GM12878 (cell line): ENCODE measurements at regions of chr9 and their contacts with region 1.

Region 1: GRCh38 chr9:14906644-14907643 is 3.3 kb downstream of the FREM1 start:
- DNase-seq: no peak
- ATAC-seq: no peak
- H3K4me3 ChIP-seq: no peak overlapping the region
- H3K27ac ChIP-seq: no peak overlapping the region
- H3K4me1 ChIP-seq: no peaks in the 10 kb centered on the region
- H3K27me3 ChIP-seq: no peaks in the 10 kb centered on the region; a peak in 1 of 4 replicates
- CTCF ChIP-seq: no peak
- EP300 ChIP-seq: no peak
- POLR2A ChIP-seq: no peak
- RAD21 ChIP-seq: no peak

Region 2: GRCh38 chr9:14710804-14711203 is 196.1 kb before region 1 on chr9:
- CTCF ChIA-PET with region 1: no interaction called
- POLR2A ChIA-PET with region 1: no interaction called
- RAD21 ChIA-PET with region 1: no interaction called
- SMC1A ChIA-PET with region 1: no interaction called
- in situ Hi-C with region 1: no loop called
- intact Hi-C with region 1: no loop called
- DNase-seq: no peak
- ATAC-seq: no peak
- H3K4me3 ChIP-seq: no peak overlapping the region
- H3K27ac ChIP-seq: no peak overlapping the region
- H3K4me1 ChIP-seq: no peaks in the 10 kb centered on the region
- H3K27me3 ChIP-seq: no peaks in the 10 kb centered on the region
- CTCF ChIP-seq: no peak
- EP300 ChIP-seq: no peak
- POLR2A ChIP-seq: no peak
- RAD21 ChIP-seq: no peak

Region 3: DNA sequence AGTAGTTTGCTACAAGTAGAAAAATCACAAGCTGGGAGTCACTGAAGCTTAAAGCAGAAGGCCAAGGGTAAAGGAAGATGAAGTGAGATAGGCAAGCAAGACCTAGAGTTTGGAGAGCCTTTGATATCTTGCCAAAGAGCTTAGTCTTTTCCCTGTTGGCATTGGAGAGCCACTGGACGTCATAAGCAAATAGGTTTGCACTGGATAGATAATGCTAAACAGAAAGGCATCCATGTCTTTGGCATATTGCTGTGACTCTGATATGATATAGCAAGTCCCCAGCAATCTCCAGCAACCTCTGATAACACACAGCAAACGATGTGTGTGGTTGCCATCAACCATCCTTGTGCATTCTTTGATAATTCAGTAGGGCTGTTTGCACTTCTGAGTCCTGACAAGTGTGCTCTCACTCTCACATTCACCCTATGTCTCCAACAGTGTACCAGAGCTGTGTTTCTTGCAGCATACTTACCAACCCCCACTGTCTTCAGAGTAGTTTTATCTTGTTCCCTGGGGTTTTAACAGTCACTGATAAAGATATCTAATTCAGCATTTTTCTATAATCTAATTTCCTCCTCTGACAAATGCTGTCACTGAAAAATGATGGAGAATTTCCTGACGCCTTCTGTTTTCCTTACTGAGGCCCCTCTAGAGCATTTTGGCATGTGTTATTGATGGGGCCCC is 20.1 kb after region 1 on chr9:
- CTCF ChIA-PET with region 1: no interaction called
- POLR2A ChIA-PET with region 1: no interaction called
- RAD21 ChIA-PET with region 1: no interaction called
- SMC1A ChIA-PET with region 1: no interaction called
- in situ Hi-C with region 1: no loop called
- intact Hi-C with region 1: loop called (anchors 2 kb)
- DNase-seq: no peak
- ATAC-seq: no peak
- H3K4me3 ChIP-seq: no peak overlapping the region
- H3K27ac ChIP-seq: no peak overlapping the region
- H3K4me1 ChIP-seq: no peaks in the 10 kb centered on the region
- H3K27me3 ChIP-seq: no peaks in the 10 kb centered on the region
- CTCF ChIP-seq: no peak
- EP300 ChIP-seq: no peak
- POLR2A ChIP-seq: no peak
- RAD21 ChIP-seq: no peak

Region 4: GRCh38 chr9:15045666-15046065 is 138.7 kb after region 1 on chr9:
- CTCF ChIA-PET with region 1: no interaction called
- POLR2A ChIA-PET with region 1: no interaction called
- RAD21 ChIA-PET with region 1: no interaction called
- SMC1A ChIA-PET with region 1: no interaction called
- in situ Hi-C with region 1: no loop called
- intact Hi-C with region 1: no loop called
- DNase-seq: no peak
- ATAC-seq: no peak
- H3K4me3 ChIP-seq: no peak overlapping the region
- H3K27ac ChIP-seq: no peak overlapping the region
- H3K4me1 ChIP-seq: no peaks in the 10 kb centered on the region
- H3K27me3 ChIP-seq: no peaks in the 10 kb centered on the region
- CTCF ChIP-seq: no peak
- EP300 ChIP-seq: no peak
- POLR2A ChIP-seq: no peak
- RAD21 ChIP-seq: no peak